ENCODE measurements at regions of chr5 and their contacts with region 1.

Region 1: GRCh38 chr5:25701936-25702335 is 1057.2 kb upstream of the CDH10 start:
- H3K4me3 Mint-ChIP-seq: no peak overlapping the region
- H3K27ac Mint-ChIP-seq: no peak overlapping the region
- H3K4me1 Mint-ChIP-seq: no peaks in the 10 kb centered on the region
- H3K27me3 Mint-ChIP-seq: no peaks in the 10 kb centered on the region

Region 2: DNA sequence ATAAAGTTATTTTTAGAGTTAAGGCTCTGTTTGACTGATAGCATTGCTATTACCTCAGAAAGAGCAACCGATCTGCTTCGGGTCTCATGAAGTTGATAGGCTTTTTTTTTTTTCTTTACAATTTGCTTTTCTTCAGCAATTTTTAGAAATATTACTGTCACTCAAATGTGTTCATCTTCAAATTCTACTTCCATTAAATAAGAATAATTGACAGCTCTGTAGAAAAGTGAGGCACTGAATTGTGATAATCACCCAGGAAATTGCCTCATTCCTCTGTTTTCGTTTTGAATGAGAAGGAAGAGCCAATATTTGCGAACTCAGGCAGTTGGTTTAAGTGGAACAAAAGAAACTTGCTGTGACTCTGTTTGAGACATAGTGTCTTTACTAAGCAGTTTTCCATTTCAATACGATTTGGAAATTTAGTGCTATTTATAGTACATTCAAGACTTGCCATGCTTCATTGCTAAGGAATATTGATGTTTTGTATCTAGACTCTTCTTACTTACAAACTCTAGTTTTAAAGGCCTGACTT is 356.6 kb before region 1 on chr5:
- intact Hi-C with region 1: no loop called
- H3K4me3 Mint-ChIP-seq: no peak overlapping the region
- H3K27ac Mint-ChIP-seq: no peak overlapping the region
- H3K4me1 Mint-ChIP-seq: no peaks in the 10 kb centered on the region
- H3K27me3 Mint-ChIP-seq: no peaks in the 10 kb centered on the region

Region 3: GRCh38 chr5:25688156-25688555 is 13.8 kb before region 1 on chr5:
- intact Hi-C with region 1: loop called (anchors 2 kb)
- H3K4me3 Mint-ChIP-seq: no peak overlapping the region
- H3K27ac Mint-ChIP-seq: no peak overlapping the region
- H3K4me1 Mint-ChIP-seq: peaks cover 5% of the 10 kb centered on the region
- H3K27me3 Mint-ChIP-seq: no peaks in the 10 kb centered on the region

Region 4: DNA sequence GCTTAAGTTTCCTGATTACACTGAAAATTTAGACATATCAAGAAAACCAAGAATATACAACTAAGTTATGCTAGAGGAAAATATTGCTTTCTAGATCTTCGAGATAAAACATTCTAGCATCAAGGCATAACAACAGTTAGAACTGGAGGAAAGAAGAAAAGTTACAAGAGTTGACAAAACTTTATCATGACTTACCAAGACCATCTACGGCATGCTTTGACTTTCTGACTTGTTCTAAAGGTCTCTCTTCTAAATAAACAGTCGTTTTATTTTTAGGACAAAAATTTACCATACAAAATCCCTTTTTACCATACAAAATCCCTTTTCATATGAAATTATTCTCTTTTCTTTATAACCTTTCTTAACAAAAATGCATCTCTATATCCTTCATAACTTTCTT is 53.0 kb after region 1 on chr5:
- intact Hi-C with region 1: no loop called
- H3K4me3 Mint-ChIP-seq: no peak overlapping the region
- H3K27ac Mint-ChIP-seq: no peak overlapping the region
- H3K4me1 Mint-ChIP-seq: no peaks in the 10 kb centered on the region
- H3K27me3 Mint-ChIP-seq: no peaks in the 10 kb centered on the region

Region 5: DNA sequence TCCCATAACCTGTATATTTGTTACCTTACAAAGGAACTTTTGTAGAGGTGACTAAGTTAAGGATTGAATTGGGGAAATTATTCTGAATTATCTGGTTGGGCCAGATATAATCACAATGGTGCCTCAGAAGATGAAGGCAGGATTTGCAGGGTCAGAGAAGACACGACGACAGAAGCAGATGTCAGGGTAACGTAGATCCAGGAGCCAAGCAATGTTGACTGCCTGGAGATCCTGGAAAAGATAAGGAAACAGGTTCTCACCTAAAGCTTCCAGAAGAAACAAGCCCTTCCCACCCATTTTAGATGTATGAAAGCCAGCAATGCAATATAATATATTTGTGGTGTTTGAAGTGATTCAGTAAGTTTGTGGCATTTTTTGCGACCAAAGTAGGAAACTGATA is 376.1 kb after region 1 on chr5:
- intact Hi-C with region 1: no loop called
- H3K4me3 Mint-ChIP-seq: no peak overlapping the region
- H3K27ac Mint-ChIP-seq: no peak overlapping the region
- H3K4me1 Mint-ChIP-seq: no peaks in the 10 kb centered on the region
- H3K27me3 Mint-ChIP-seq: no peaks in the 10 kb centered on the region